Gastrocnemius medialis (tissue), 4 donors: ENCODE measurements at regions of chr1 and their contacts with region 1.

Region 1: DNA sequence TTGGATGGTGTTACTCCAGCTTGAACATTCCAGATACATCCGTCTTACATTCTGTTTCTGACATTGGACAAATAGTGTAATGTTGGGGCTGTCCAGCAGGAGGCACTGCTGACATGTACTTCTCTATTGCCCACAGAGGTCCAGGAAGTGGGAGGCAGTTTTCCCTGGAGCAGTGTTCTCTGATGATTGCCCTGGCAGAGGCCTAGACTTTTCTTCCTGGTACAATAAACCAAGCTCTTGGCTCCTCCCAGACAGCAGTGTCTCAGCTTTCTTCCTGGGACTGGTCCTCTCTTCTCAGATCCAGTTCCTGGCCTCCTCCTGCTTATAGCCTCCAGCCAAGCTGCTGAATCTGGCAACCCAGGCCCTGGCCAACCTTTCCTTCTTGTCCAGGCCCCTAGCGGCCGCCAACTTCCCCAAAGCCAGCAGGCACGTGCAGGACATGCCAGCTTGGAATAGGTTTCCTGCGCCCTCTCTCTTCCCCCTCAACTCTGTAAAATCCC is 14.9 kb upstream of the IFNLR1 start:
- DNase-seq: peak; percentile 46 to 75
- ATAC-seq: peak; percentile 75 to 84
- H3K4me3 ChIP-seq: no peak overlapping the region
- H3K27ac ChIP-seq: peak overlapping the region in 3 of 4 donors; percentile 21 to 36 (median 30)
- H3K4me1 ChIP-seq: peaks cover 0 to 3% of the 10 kb centered on the region in 2 donors
- H3K27me3 ChIP-seq: peaks cover 4 to 8% (median 8%) of the 10 kb centered on the region in 3 donors
- CTCF ChIP-seq: peak; percentile 54 to 82 (median 73)
- POLR2A ChIP-seq: no peak

Region 2: GRCh38 chr1:24248859-24249258 is 46.9 kb after region 1 on chr1:
- in situ Hi-C with region 1: no loop called
- intact Hi-C with region 1: no loop called
- DNase-seq: no peak
- ATAC-seq: no peak
- H3K4me3 ChIP-seq: no peak overlapping the region
- H3K27ac ChIP-seq: no peak overlapping the region
- H3K4me1 ChIP-seq: no peaks in the 10 kb centered on the region
- H3K27me3 ChIP-seq: no peaks in the 10 kb centered on the region
- CTCF ChIP-seq: no peak
- POLR2A ChIP-seq: no peak

Region 3: DNA sequence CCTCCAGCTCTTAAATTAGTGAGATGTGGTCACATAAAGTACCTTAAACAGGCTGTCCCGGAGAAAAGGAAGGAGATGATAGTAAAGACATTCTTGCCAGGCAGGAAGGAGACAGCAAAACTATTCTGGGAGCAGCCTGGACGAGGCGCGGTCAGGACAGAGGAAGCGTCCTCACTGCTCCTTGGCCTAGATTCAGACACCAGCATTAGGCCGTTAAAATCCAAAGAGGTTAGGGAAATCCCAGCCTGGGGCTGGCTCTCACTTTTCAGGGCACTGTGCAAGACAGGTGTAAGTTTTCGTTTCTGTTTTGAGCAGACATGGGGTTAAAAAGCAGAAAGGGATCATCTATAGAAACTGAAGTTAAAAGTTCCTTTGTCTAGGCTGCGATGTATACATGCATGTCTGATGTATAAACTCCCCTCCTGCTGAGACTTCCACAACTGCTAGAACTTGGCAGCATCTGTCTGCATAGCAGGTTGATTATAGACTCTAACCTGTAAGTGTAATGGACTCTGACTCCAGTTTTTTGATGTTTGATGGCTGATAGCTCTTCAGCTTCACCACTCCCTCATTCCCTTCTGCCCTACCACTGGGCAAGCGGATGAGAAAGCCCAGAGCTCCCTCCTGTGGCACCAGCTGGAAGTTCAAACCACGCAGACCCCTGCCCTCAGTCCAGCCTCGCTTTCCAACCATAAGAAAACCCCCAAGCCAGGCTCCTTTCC is 190.1 kb after region 1 on chr1:
- in situ Hi-C with region 1: loop called (anchors 5 kb)
- intact Hi-C with region 1: loop called (anchors 1 kb)
- DNase-seq: peak; percentile 28 to 54
- ATAC-seq: peak; percentile 80 to 87
- H3K4me3 ChIP-seq: peak overlapping the region; percentile 32 to 37 (median 34)
- H3K27ac ChIP-seq: peak overlapping the region; percentile 77 to 85 (median 82)
- H3K4me1 ChIP-seq: peaks cover 6 to 19% of the 10 kb centered on the region in 2 donors
- H3K27me3 ChIP-seq: no peaks in the 10 kb centered on the region
- CTCF ChIP-seq: peak; percentile 68 to 83 (median 76)
- POLR2A ChIP-seq: no peak

Region 4: DNA sequence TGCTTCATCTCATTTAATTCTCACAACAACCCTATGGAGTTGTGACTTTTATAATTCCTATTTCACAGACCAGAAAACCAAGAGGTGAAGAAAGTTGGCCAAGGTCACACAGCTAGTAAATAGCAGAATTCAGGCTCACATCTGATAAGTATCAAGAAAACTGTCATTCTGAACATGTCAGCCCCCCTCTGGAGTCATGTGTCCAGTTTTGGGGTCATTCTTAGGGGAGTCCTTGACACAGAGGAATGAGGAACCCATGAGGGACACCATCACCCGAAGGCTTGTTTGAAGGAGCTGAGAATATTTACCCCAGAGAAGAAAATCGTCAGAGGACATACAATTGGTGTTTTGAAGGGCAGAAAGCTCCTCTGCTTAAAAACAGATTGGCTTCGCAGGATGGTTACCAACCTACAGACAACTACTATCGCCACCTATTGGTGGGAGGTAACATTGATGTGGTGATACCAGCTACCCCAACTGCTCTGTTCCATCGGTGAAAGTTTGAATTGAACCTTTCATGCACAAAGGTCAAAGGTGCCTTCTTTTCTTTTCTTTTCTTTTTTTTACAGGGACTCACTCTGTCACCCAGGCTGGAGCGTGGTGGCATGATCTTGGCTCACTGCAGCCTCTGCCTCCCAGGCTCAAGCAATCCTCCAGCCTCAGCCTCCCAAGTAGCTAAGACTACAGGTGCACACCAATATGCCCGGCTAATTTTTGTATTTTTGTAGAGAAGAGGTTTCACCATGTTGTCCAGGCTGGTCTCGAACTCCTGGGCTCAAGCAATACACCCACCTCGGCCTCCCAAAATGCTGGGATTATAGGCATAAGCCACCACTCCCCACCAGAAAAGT is 385.2 kb after region 1 on chr1:
- in situ Hi-C with region 1: loop called in 1 of 4 experiments (anchors 25 kb)
- intact Hi-C with region 1: no loop called
- DNase-seq: no peak
- ATAC-seq: peak in 1 of 2 donors; percentile 53
- H3K4me3 ChIP-seq: no peak overlapping the region
- H3K27ac ChIP-seq: no peak overlapping the region
- H3K4me1 ChIP-seq: peaks cover 0 to 5% of the 10 kb centered on the region in 2 donors
- H3K27me3 ChIP-seq: peaks cover 0 to 5% (median 0%) of the 10 kb centered on the region in 3 donors
- CTCF ChIP-seq: peak in 4 of 5 experiments; percentile 2 to 59 (median 48)
- POLR2A ChIP-seq: no peak

Region 5: GRCh38 chr1:24635195-24635843 is 433.3 kb after region 1 on chr1:
- in situ Hi-C with region 1: loop called in 2 of 4 experiments (anchors 5 to 25 kb)
- intact Hi-C with region 1: loop called (anchors 5 kb)
- DNase-seq: no peak
- ATAC-seq: no peak
- H3K4me3 ChIP-seq: no peak overlapping the region
- H3K27ac ChIP-seq: no peak overlapping the region
- H3K4me1 ChIP-seq: no peaks in the 10 kb centered on the region
- H3K27me3 ChIP-seq: peaks cover 0 to 12% (median 2%) of the 10 kb centered on the region in 3 donors
- CTCF ChIP-seq: peak in 3 of 5 experiments; percentile 37 to 47 (median 43)
- POLR2A ChIP-seq: no peak